Pancreas (tissue), 10 donors: ENCODE measurements at regions of chr19 and their contacts with region 1.

Region 1: DNA sequence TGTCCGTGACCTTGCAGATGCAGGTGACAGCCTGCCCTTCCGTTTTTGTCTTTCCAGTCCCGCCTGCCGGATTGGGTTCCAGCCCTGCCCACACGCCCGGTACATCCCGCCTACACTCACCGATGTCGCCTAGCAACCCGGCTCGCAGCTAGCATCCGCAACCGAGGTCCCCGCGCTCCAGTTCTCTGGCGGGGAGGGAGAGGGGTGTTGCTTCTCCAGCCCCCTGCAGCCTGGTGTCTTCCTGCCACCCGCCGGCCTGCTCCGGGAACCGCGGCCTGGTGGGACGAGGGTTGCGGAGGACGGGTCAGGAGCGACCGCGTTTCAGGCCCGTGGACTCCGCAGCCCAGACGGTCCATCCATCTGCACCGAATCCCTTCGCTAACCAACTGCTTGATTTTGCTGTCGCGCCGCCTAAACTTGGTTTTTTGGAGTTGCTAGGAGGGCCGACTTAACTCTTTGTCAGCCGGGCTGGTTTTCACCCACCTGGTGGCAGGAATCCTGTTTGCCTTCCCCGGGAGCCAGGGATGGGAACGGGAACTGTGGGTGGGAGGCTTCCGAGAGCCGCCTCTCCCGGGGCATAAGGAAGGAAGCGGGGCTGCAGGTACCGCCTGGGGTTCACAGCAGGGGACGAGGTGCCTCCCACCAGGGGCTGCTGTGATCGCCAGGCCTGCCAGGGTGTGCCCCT is 15.4 kb upstream of the MATK start:
- DNase-seq: peak in 1 of 6 donors; percentile 48
- ATAC-seq: peak in 3 of 4 donors; percentile 41 to 60 (median 56)
- H3K4me3 ChIP-seq: peak overlapping the region in 1 of 4 donors; percentile 12
- H3K27ac ChIP-seq: no peak overlapping the region
- H3K4me1 ChIP-seq: no peaks in the 10 kb centered on the region
- H3K27me3 ChIP-seq: peaks cover 0 to 5% (median 0%) of the 10 kb centered on the region in 4 donors
- CTCF ChIP-seq: no peak

Region 2: DNA sequence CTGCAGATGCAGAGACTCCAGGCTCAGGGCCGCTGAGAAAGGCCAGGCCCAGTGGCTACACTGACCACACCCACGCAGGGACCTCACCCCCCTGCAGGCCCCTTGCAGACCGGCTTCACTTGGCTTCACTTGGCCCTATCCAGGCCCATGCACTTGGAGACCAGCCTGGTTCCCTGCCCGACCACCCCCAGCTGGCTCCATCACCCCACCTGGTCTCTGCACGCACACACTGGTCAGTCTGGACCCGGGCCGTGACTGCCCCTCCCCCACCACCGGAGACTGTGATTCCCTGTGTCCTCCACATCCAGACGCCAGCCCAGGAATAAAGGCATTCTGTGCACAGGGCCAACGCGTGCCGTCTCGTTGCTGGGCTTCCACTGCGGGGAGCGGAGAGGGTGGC is 422.9 kb after region 1 on chr19:
- intact Hi-C with region 1: loop called in 1 of 3 experiments (anchors 5 kb)
- DNase-seq: no peak
- ATAC-seq: no peak
- H3K4me3 ChIP-seq: no peak overlapping the region
- H3K27ac ChIP-seq: no peak overlapping the region
- H3K4me1 ChIP-seq: peaks cover 0 to 4% (median 0%) of the 10 kb centered on the region in 3 donors
- H3K27me3 ChIP-seq: no peaks in the 10 kb centered on the region
- CTCF ChIP-seq: no peak